Natural killer cell (primary cell): ENCODE measurements at regions of chr22 and their contacts with region 1.

Region 1: DNA sequence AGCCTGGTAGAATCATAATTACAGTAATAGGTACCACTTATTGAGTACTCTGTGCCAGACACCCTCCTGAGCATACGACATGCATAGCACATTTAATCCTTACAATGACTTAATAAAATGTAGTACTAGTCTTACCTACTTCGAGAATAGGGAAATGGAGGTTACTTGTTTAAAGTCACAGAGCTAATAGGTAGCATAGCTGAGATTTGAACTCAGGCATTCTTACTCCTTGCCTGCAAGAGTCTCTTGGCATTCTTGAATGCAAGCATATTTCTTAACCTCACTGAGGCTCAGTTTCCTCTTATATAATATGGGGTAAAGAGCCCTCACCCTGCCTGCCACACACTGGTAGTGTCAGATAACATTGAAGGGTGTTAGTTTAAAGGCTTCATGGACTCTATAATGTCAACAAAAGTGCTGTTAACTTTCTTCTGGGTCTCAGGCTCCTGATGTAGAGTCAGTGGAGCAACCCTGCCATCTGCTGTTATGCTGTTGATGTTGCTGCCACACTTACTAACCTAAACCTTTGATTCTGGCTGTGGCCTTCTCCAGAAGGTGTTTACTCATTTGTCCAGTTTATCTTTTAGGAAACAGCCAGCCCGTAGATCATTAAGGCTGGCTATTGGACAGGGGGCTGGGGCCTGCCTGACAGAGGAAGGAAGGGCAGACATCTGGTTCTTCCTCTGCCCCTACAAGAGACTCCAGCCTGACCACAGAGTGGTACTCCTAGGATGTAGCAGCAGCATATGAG is 18.9 kb downstream of the LIMK2 start:
- DNase-seq: peak; percentile 45 to 84
- ATAC-seq: peak; percentile 84 to 86 (median 84)
- H3K4me3 ChIP-seq: no peak overlapping the region
- H3K4me3 Mint-ChIP-seq: peak overlapping the region; percentile 32
- H3K27ac ChIP-seq: peak overlapping the region; percentile 83
- H3K27ac Mint-ChIP-seq: peak overlapping the region; percentile 85 to 87
- H3K4me1 ChIP-seq: peaks cover 33% of the 10 kb centered on the region
- H3K4me1 Mint-ChIP-seq: peaks cover 32 to 44% of the 10 kb centered on the region in 2 donors
- H3K27me3 ChIP-seq: no peaks in the 10 kb centered on the region
- H3K27me3 Mint-ChIP-seq: no peaks in the 10 kb centered on the region
- CTCF ChIP-seq: peak; percentile 74

Region 2: DNA sequence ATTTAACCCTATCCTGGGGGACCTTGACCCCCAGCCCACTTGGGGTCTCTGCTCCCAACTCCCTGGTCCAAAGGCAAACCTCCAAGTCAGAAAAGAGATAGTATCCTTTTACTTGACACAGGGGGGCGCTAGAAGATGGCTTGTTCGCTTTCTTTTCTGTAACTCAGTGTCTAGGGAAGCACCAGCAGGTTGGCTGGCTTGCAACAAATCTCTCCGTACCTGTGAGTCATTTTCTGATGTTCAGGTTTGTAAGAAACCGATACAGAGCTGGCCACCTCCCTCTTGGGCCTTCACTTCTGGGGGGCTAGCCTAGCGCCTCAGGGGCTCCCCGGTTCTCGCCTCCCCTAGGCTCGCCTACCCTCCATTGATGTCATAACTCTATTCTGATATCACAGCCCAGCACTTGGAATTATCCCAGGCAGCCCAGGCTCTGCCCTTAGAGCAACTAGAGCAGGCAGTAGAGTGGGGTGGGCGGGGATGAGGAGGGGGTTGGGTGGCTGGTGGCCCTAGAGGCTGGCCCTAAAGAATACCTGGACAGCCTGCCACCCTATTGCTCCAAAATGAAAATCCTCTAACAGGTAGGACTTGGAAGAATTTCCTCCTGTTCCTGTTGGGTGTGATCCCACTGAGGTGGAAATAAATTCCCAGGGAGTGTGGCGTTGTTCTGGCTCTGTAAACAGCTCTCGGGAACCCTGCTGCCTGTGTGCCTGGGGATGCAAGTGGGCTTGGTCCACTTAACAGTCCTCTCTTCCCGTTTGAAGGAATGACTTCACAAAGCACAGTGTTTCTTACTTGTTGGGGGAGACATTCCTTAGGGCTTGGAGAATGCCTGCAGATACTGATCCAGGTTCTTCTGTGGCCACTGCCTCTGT is 467.0 kb before region 1 on chr22:
- intact Hi-C with region 1: loop called (anchors 2 kb)
- DNase-seq: peak in 1 of 2 donors; percentile 82
- ATAC-seq: peak; percentile 45 to 52 (median 49)
- H3K4me3 ChIP-seq: no peak overlapping the region
- H3K4me3 Mint-ChIP-seq: no peak overlapping the region
- H3K27ac ChIP-seq: no peak overlapping the region
- H3K27ac Mint-ChIP-seq: no peak overlapping the region
- H3K4me1 ChIP-seq: no peaks in the 10 kb centered on the region
- H3K4me1 Mint-ChIP-seq: no peaks in the 10 kb centered on the region
- H3K27me3 ChIP-seq: no peaks in the 10 kb centered on the region
- H3K27me3 Mint-ChIP-seq: no peaks in the 10 kb centered on the region
- CTCF ChIP-seq: peak; percentile 35

Region 3: DNA sequence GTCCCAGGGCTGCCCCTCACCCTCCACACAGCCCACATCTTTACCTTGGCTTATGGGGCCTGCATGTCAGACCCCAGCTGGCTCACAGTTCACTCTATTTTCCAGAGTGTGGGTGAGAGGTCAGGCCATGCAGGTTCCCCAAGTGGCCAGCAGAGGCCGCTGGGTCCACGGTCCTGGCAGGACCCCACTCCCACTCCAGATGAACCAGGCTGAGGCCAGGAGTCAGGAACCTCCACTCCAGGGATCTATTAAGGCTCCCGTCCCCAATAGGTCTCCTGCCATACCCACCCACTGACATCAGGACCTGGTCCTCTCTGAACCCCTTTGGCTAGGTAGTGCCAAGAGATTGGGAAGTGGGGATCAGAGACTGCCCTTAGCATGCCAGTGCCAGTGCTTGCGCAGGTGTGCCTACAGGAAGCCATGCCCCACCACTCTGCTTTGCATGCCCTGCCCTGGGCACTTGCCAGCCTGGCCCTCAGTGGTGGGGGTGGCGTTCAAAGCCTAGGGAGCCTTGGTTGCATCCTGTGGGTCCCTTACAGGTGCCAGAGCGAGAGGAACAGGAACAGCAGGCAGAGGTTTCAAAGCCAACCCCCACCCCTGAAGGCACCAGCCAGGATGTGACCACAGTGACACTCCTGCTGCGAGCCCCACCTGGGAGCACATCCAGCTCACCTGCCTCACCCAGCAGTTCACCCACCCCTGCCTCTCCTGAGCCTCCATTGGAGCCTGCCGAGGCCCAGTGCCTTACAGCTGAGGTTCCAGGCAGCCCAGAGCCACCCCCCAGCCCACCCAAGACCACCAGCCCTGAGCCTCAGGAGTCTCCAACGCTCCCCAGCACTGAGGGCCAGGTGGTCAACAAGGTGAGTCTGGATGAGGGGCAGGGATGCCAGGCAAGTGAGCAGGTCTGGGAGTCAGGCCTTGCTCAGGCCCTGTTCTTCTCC is 141.6 kb before region 1 on chr22:
- intact Hi-C with region 1: loop called (anchors 1 kb)
- DNase-seq: peak in 1 of 2 donors; percentile 65
- ATAC-seq: no peak
- H3K4me3 ChIP-seq: no peak overlapping the region
- H3K4me3 Mint-ChIP-seq: no peak overlapping the region
- H3K27ac ChIP-seq: no peak overlapping the region
- H3K27ac Mint-ChIP-seq: no peak overlapping the region
- H3K4me1 ChIP-seq: peaks cover 14% of the 10 kb centered on the region
- H3K4me1 Mint-ChIP-seq: peaks cover 1 to 6% of the 10 kb centered on the region in 2 donors
- H3K27me3 ChIP-seq: no peaks in the 10 kb centered on the region
- H3K27me3 Mint-ChIP-seq: no peaks in the 10 kb centered on the region
- CTCF ChIP-seq: peak; percentile 47

Region 4: DNA sequence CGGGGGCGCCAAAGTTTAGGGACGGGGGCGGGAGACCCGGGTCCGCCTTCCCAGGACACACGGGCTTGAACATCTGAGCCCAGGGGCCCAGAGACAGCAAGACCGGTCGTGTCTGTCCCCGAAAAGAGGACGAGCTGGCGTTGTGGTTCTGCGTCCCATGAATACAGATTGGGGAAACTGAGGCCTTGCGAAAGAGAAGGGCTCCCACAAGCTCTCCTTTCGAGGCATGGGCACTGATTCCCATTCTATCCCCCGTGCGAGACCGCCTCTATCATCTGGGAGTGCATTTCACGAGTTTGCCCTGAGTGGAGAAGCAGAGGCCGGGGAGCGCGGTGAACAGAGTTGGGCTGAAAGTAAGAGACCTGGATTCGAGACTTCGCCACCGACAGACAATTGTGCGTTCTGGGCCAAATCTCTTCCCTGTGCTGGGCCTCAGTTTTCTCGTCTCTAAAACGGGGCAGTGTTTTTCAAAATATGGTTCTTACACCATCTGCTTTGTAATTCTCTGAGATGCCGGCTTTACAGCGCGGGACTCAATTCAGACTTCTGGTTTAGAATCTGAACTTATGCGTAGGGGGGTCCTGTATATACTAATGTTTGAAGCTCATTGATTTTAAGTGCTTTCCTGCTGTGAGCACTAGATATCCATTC is 70.6 kb before region 1 on chr22:
- intact Hi-C with region 1: loop called (anchors 2 kb)
- DNase-seq: peak in 1 of 2 donors; percentile 46
- ATAC-seq: peak; percentile 43 to 47 (median 45)
- H3K4me3 ChIP-seq: peak overlapping the region; percentile 72
- H3K4me3 Mint-ChIP-seq: peak overlapping the region; percentile 97
- H3K27ac ChIP-seq: peak overlapping the region; percentile 76
- H3K27ac Mint-ChIP-seq: peak overlapping the region; percentile 91 to 93
- H3K4me1 ChIP-seq: peaks cover 15% of the 10 kb centered on the region
- H3K4me1 Mint-ChIP-seq: peaks cover 25 to 36% of the 10 kb centered on the region in 2 donors
- H3K27me3 ChIP-seq: no peaks in the 10 kb centered on the region
- H3K27me3 Mint-ChIP-seq: no peaks in the 10 kb centered on the region
- CTCF ChIP-seq: no peak

Region 5: GRCh38 chr22:31295831-31296657 is 65.0 kb after region 1 on chr22:
- intact Hi-C with region 1: no loop called
- DNase-seq: no peak
- ATAC-seq: no peak
- H3K4me3 ChIP-seq: no peak overlapping the region
- H3K4me3 Mint-ChIP-seq: no peak overlapping the region
- H3K27ac ChIP-seq: no peak overlapping the region
- H3K27ac Mint-ChIP-seq: no peak overlapping the region
- H3K4me1 ChIP-seq: peaks cover 20% of the 10 kb centered on the region
- H3K4me1 Mint-ChIP-seq: peaks cover 11 to 16% of the 10 kb centered on the region in 2 donors
- H3K27me3 ChIP-seq: no peaks in the 10 kb centered on the region
- H3K27me3 Mint-ChIP-seq: no peaks in the 10 kb centered on the region
- CTCF ChIP-seq: no peak